Panc1 (cell line): ENCODE measurements at regions of chr9 and their contacts with region 1.

Region 1: DNA sequence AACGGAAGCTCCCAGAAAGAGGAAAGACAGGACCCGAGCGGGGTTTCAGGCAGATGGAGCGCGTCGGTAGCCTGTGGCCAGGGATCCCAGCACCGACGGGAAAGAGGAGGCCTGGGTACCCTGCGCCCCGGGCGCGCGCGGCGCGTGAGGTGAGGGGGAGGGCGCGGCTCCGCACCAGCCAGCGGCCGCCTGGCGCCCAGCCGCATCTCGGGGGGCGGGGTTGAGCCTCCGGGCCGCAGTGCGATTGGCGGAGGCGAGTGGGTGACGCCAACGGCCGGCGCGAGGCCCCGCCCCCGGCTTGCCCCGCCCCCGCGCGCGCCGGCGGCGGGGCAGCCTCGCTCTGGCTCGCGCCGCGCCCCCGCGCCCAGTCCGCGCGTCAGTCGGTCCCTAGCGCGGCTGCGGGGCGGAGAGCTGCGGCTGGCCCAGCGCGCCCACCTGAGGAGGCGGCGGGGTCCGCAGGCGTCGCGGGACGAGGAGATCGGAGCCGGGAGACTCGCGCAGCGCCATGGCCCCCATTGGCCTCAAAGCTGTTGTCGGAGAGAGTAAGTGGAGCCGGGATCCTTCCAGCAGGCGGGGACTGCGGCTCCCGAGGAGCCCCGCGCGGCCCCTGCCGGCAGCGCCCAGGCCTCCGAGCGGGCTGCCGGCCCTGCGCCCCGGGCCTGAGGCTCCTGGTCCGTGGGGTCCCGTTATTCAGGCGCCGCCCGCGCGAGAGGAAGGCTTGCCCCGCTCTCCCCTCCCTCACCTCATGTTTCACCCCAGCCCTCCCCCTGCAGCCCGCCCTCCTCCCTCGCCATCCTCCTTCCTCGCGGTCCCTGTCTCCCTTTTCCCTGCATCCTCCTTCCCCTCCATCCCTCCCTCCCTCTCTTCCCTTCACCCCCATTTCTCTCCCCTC is at the start of gene STXBP1:
- DNase-seq: no peak
- ATAC-seq: peak; percentile 88
- H3K4me3 ChIP-seq: peak within 1 kb of the TSS; percentile 71 to 72
- H3K27ac ChIP-seq: peak within 1 kb of the TSS; percentile 88
- H3K4me1 ChIP-seq: peaks cover 27% of the 10 kb centered on the region
- H3K27me3 ChIP-seq: no peaks in the 10 kb centered on the region
- CTCF ChIP-seq: no peak
- total RNA-seq, gene STXBP1: 67.5 TPM

Region 2: DNA sequence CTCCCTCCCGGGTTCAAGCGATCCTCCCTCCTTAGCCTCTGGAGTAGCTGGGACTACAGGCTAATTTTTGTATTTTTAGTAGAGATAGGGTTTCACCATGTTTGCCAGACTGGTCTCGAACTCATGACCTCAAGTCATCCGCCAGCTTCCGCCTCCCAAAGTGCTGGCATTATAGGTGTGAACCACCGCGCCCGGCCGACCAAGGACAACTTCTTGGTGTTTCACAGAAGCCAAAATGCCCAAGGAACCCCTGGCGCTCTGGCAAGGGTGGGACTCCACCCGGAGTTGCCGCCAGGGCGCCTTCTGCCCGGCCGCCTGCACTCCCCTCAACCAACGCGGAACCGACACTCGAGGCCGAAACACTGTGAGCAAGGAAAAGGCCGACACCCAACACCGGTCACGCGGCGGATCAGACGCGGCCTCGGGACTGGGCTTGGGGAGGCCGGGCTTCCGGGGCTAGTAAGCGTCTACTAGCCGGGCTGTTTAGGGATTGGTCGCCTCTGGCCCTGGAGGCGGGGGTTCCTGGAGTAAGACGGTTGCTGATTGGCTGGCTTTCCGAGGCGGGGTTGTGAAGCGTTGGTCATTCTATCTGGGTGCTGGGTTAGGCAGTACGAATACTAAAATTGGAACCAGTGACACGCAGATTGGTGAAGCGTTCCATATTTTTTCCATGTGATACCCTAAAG is 87.0 kb after region 1 on chr9:
- CTCF ChIA-PET with region 1: interaction called, 14 read pairs
- POLR2A ChIA-PET with region 1: no interaction called
- in situ Hi-C with region 1: no loop called
- intact Hi-C with region 1: no loop called
- DNase-seq: no peak
- ATAC-seq: peak; percentile 64; the same call in 1 of the 2 replicates
- H3K4me3 ChIP-seq: no peak overlapping the region
- H3K27ac ChIP-seq: no peak overlapping the region
- H3K4me1 ChIP-seq: no peaks in the 10 kb centered on the region
- H3K27me3 ChIP-seq: no peaks in the 10 kb centered on the region
- CTCF ChIP-seq: no peak